PC-9 (cell line): ENCODE measurements at regions of chr6 and their contacts with region 1.

Region 1: GRCh38 chr6:55276745-55277530 is 50.3 kb upstream of the GFRAL start:
- DNase-seq: peak; percentile 18 to 57
- H3K4me3 ChIP-seq: no peak overlapping the region
- H3K27ac ChIP-seq: no peak overlapping the region
- H3K4me1 ChIP-seq: no peaks in the 10 kb centered on the region; the same call in 1 of the 2 replicates
- H3K27me3 ChIP-seq: no peaks in the 10 kb centered on the region
- CTCF ChIP-seq: peak; percentile 75

Region 2: GRCh38 chr6:55445648-55446204 is 168.8 kb after region 1 on chr6:
- CTCF ChIA-PET with region 1: interaction called, 3 read pairs
- POLR2A ChIA-PET with region 1: no interaction called
- intact Hi-C with region 1: loop called (anchors 5 kb)
- DNase-seq: no peak
- H3K4me3 ChIP-seq: no peak overlapping the region
- H3K27ac ChIP-seq: no peak overlapping the region
- H3K4me1 ChIP-seq: no peaks in the 10 kb centered on the region
- H3K27me3 ChIP-seq: no peaks in the 10 kb centered on the region
- CTCF ChIP-seq: peak; percentile 82

Region 3: GRCh38 chr6:55953335-55953734 is 676.4 kb after region 1 on chr6:
- CTCF ChIA-PET with region 1: interaction called, 3 read pairs
- POLR2A ChIA-PET with region 1: no interaction called
- intact Hi-C with region 1: loop called (anchors 5 kb)
- DNase-seq: no peak
- H3K4me3 ChIP-seq: no peak overlapping the region
- H3K27ac ChIP-seq: no peak overlapping the region
- H3K4me1 ChIP-seq: no peaks in the 10 kb centered on the region
- H3K27me3 ChIP-seq: no peaks in the 10 kb centered on the region
- CTCF ChIP-seq: peak; percentile 60

Region 4: GRCh38 chr6:56292505-56293181 is 1015.7 kb after region 1 on chr6:
- CTCF ChIA-PET with region 1: interaction called, 5 read pairs
- POLR2A ChIA-PET with region 1: no interaction called
- intact Hi-C with region 1: loop called (anchors 2 kb)
- DNase-seq: peak in 1 of 2 experiments; percentile 40
- H3K4me3 ChIP-seq: no peak overlapping the region
- H3K27ac ChIP-seq: no peak overlapping the region
- H3K4me1 ChIP-seq: peaks cover 5% of the 10 kb centered on the region
- H3K27me3 ChIP-seq: no peaks in the 10 kb centered on the region
- CTCF ChIP-seq: peak; percentile 79

Region 5: DNA sequence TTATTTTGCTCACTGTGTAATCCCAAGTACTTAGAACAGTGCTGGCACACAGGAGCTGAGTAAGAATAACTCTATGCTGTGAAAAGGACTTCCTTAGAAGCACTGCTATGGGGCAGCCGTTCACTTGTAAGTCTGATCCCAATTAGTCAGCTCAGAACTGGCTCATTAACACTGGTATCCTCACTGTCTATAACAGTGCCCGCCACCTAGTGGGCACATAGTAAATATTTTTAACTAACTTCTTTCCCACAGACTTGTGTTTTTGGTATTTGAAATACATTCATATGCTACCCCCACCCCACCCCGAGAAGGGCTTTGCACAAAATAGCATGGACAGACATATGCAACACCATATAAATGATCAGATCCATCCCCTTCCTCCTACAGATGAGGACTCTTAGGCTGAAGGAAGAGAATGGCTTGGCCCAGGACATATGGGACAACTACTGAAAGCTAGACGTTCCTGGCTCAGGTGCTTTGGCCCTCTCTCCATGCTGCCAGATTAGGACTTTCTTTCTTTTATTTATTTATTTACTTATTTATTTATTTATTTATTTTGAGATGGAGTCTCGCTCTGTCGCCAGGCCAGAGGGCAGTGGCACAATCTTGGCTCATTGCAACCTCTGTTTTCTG is 1318.7 kb after region 1 on chr6:
- CTCF ChIA-PET with region 1: no interaction called
- POLR2A ChIA-PET with region 1: no interaction called
- intact Hi-C with region 1: loop called (anchors 10 kb)
- DNase-seq: peak; percentile 5 to 43
- H3K4me3 ChIP-seq: no peak overlapping the region
- H3K27ac ChIP-seq: no peak overlapping the region
- H3K4me1 ChIP-seq: no peaks in the 10 kb centered on the region
- H3K27me3 ChIP-seq: no peaks in the 10 kb centered on the region
- CTCF ChIP-seq: peak; percentile 81